Activated CD8-positive, alpha-beta T cell treated with anti-CD3 and anti-CD28 coated beads, Interleukin-2, amount 10 ng/mL, durations not matched to agents 7 days and 5 days (primary cell): ENCODE measurements at regions of chr15 and their contacts with region 1.

Region 1: GRCh38 chr15:31435261-31435911 is 108.8 kb downstream of the KLF13 start:
- DNase-seq: peak; percentile 92
- ATAC-seq: peak; percentile 71
- H3K4me3 Mint-ChIP-seq: peak overlapping the region; percentile 74
- H3K27ac Mint-ChIP-seq: peak overlapping the region; percentile 99
- H3K4me1 Mint-ChIP-seq: peaks cover 83% of the 10 kb centered on the region
- H3K27me3 Mint-ChIP-seq: no peaks in the 10 kb centered on the region

Region 2: DNA sequence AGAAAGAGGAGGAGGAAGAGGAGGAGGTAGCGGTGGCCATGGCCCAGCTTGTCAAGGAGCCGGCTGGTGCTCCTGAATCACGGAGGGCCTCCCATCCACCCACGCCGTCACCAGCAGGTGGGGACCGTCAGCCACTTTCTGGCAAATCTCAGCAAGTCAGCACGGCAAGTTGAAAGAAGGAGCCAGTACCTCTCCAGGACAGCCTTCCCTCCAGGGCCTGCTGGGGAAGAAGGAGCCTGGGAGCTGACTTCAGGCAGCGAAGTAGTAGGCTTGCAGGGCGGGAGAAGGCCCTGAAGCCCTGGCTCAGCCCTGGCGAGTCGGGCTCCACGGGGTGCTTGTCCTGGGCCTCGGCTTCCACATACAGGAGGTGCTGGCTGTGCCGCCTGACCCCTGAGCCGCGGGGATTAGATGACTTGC is 234.6 kb before region 1 on chr15:
- CTCF ChIA-PET with region 1: interaction called, 11 read pairs
- POLR2A ChIA-PET with region 1: no interaction called
- DNase-seq: peak; percentile 80
- ATAC-seq: peak; percentile 86
- H3K4me3 Mint-ChIP-seq: no peak overlapping the region
- H3K27ac Mint-ChIP-seq: peak overlapping the region; percentile 32
- H3K4me1 Mint-ChIP-seq: peaks cover 19% of the 10 kb centered on the region
- H3K27me3 Mint-ChIP-seq: peaks cover 14% of the 10 kb centered on the region

Region 3: DNA sequence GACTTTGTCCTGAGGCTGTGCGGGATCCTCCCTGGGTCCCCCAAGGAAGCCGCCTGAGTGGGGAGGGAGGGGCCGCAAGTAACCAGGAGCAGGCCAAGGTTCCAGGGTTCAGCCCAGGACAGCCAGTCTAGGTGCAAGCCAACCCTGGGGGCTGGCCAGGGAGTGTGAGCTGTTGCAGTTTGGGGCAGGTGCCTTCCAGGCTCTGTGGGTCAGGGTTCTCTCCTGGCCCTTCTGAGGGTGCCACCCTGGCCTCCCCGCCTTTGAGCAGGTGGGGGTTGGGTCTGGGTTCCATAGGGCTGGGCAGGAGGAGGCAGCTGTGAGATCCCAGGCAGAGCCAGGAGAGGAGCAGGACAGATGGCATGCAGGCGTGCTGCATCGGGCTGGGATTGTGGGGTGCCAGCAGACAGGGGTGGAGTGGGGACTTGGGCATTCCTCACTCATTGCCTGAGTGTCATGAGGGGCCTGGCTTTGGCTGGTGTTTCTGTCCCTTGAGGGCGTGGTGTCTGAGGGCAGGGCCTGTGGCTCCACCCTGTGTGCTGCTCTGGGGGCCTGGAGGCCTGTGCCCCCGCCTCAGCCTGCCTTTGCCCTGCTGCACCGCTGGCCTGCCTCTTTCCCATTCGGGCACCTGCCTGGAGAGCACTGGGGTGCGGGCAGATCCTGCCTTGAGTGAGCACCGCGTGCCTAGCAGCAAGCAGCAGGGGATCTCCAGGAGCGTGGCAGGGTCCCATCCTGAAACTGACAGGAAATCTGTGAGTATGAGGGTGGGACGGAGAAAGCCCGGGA is 90.4 kb before region 1 on chr15:
- CTCF ChIA-PET with region 1: interaction called, 19 read pairs
- POLR2A ChIA-PET with region 1: interaction called, 18 read pairs
- DNase-seq: peak; percentile 61
- ATAC-seq: peak; percentile 21
- H3K4me3 Mint-ChIP-seq: peak overlapping the region; percentile 95
- H3K27ac Mint-ChIP-seq: peak overlapping the region; percentile 97
- H3K4me1 Mint-ChIP-seq: peaks cover 98% of the 10 kb centered on the region
- H3K27me3 Mint-ChIP-seq: no peaks in the 10 kb centered on the region

Region 4: GRCh38 chr15:31391687-31392671 is 43.4 kb before region 1 on chr15:
- CTCF ChIA-PET with region 1: interaction called, 23 read pairs
- POLR2A ChIA-PET with region 1: interaction called, 46 read pairs
- DNase-seq: peak; percentile 87
- ATAC-seq: peak; percentile 87
- H3K4me3 Mint-ChIP-seq: peak overlapping the region; percentile 83
- H3K27ac Mint-ChIP-seq: peak overlapping the region; percentile 89
- H3K4me1 Mint-ChIP-seq: peaks cover 58% of the 10 kb centered on the region
- H3K27me3 Mint-ChIP-seq: no peaks in the 10 kb centered on the region

Region 5: DNA sequence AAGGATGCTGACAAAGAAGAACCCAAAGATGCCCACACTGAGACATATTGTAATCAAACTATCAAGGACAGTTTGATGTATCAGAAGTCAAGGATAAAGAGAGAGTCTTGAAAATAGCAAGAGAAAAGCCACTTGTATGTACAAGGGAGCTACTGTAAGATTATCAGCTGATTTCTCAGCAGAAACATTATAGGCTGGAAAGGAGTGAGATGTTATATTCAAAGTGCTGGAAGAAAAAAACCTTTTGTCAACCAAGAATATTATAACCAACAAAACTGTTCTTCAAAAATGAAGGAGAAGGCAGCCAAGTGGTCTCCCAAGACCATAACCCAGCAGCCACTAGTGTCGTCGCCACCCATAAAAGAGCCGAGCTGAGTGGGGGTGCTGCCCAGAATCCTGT is 15.6 kb before region 1 on chr15:
- CTCF ChIA-PET with region 1: interaction called, 10 read pairs
- POLR2A ChIA-PET with region 1: interaction called, 4 read pairs
- DNase-seq: no peak
- ATAC-seq: no peak
- H3K4me3 Mint-ChIP-seq: no peak overlapping the region
- H3K27ac Mint-ChIP-seq: no peak overlapping the region
- H3K4me1 Mint-ChIP-seq: no peaks in the 10 kb centered on the region
- H3K27me3 Mint-ChIP-seq: no peaks in the 10 kb centered on the region

Region 6: DNA sequence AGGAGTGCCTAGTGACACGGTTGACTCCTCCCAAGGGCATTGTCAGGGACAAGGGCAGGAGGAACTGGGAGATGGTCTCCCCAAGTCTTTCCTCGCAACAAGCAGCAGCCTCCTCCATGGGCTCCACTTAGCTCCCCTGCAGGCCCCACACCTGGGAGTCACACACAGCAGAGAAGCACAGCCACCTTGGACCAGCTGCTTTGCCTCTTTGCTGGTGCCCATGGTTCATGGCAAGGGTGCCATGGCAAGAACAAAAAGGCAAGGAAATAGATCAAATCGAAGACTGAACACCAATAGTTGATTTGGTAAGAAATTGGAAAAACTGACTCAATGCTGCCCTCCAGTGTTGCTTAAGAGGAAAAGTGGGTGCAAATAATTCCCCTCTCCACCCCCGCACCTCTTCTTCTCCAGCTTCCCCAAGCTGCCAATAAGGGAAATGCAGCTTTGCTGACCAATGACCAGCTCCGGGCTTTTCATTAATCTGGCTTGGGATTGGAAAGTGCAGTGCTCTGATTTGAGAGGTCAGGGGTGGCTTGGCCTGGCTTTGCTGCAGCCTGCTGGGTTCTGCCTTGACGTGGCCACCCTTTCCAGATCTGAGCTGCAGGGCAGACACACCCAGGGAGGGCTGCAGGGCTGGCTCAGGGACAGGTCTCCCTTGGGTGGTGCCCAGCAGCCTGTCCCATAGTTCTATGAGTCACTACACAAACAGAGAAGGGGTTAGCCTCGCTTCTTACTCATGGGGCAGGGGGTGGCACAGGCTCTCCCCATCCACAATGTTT is 53.2 kb after region 1 on chr15:
- CTCF ChIA-PET with region 1: interaction called, 234 read pairs
- POLR2A ChIA-PET with region 1: interaction called, 4 read pairs
- DNase-seq: peak; percentile 59
- ATAC-seq: peak; percentile 58
- H3K4me3 Mint-ChIP-seq: no peak overlapping the region
- H3K27ac Mint-ChIP-seq: peak overlapping the region; percentile 72
- H3K4me1 Mint-ChIP-seq: peaks cover 59% of the 10 kb centered on the region
- H3K27me3 Mint-ChIP-seq: no peaks in the 10 kb centered on the region

Region 7: DNA sequence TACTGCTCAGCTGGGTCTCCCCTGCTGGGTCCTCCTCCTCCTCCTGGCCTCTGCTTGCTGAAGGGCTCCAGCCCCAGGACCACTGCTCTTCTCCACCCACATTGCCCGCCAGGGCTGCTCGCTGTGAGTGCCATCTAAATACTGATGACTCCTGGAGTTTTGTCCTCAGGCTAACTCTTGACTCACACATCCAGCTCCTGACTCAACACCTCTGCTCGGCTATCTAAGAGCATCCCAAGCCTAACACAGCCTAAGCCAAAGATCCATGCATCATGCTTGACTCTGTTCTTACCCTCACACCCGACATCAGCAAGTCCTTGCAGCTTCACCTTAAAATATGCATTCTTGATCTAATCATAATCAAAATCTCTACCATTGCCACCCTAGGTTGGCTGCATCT is 151.5 kb after region 1 on chr15:
- CTCF ChIA-PET with region 1: no interaction called
- POLR2A ChIA-PET with region 1: no interaction called
- DNase-seq: no peak
- ATAC-seq: no peak
- H3K4me3 Mint-ChIP-seq: no peak overlapping the region
- H3K27ac Mint-ChIP-seq: no peak overlapping the region
- H3K4me1 Mint-ChIP-seq: no peaks in the 10 kb centered on the region
- H3K27me3 Mint-ChIP-seq: peaks cover 4% of the 10 kb centered on the region